Natural killer cell (primary cell): ENCODE measurements at regions of chr17 and their contacts with region 1.

Region 1: DNA sequence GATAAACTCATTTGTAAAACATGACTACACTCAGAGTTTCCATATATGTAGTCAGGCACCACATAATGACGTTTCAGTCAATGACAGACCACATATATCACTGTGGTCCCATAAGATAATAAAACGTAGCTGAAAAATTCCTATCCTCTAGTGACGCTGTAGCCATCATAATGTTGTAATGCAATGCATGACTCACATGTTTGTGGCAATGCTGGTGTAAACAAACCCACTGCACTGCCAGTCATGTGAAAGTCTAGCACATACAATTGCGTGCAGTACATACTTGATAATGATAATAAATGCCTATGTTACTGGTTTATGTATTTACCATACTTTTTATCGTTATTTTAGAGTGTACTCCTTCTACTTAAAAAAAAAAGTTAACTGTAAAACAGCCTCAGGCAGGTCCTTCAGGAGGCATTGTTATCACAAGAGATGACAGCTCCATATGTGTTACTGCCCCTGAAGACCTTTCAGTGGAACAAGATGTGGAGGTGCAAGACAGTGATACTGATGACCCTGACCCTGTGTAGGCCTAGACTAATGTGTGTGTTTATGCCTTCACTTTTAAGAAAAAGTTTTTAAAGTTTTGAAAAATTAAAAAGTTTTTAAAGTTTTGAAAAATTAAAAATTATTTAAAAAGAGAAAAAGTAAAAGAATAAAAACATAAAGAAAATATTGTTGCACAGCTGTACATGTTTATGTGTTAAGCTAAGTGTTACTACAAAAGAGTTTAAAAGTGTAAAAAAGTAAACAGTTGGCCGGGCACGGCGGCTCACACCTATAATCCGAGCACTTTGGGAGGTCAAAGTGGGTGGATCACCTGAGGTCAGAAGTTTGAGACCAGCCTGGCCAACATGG is 9.0 kb downstream of the STAT5B start:
- DNase-seq: peak in 1 of 2 donors; percentile 88
- ATAC-seq: peak; percentile 86 to 95 (median 89)
- H3K4me3 ChIP-seq: no peak overlapping the region
- H3K4me3 Mint-ChIP-seq: no peak overlapping the region
- H3K27ac ChIP-seq: peak overlapping the region; percentile 49
- H3K27ac Mint-ChIP-seq: peak overlapping the region; percentile 80 to 89
- H3K4me1 ChIP-seq: peaks cover 3% of the 10 kb centered on the region
- H3K4me1 Mint-ChIP-seq: peaks cover 15 to 20% of the 10 kb centered on the region in 2 donors
- H3K27me3 ChIP-seq: no peaks in the 10 kb centered on the region
- H3K27me3 Mint-ChIP-seq: no peaks in the 10 kb centered on the region
- CTCF ChIP-seq: no peak

Region 2: GRCh38 chr17:42248351-42249179 is 18.6 kb before region 1 on chr17:
- intact Hi-C with region 1: loop called (anchors 2 kb)
- DNase-seq: peak; percentile 69 to 95
- ATAC-seq: peak; percentile 93 to 98 (median 96)
- H3K4me3 ChIP-seq: peak overlapping the region; percentile 28
- H3K4me3 Mint-ChIP-seq: peak overlapping the region; percentile 93
- H3K27ac ChIP-seq: peak overlapping the region; percentile 88
- H3K27ac Mint-ChIP-seq: peak overlapping the region; percentile 97 to 100
- H3K4me1 ChIP-seq: peaks cover 32% of the 10 kb centered on the region
- H3K4me1 Mint-ChIP-seq: peaks cover 39 to 48% of the 10 kb centered on the region in 2 donors
- H3K27me3 ChIP-seq: no peaks in the 10 kb centered on the region
- H3K27me3 Mint-ChIP-seq: no peaks in the 10 kb centered on the region
- CTCF ChIP-seq: no peak

Region 3: DNA sequence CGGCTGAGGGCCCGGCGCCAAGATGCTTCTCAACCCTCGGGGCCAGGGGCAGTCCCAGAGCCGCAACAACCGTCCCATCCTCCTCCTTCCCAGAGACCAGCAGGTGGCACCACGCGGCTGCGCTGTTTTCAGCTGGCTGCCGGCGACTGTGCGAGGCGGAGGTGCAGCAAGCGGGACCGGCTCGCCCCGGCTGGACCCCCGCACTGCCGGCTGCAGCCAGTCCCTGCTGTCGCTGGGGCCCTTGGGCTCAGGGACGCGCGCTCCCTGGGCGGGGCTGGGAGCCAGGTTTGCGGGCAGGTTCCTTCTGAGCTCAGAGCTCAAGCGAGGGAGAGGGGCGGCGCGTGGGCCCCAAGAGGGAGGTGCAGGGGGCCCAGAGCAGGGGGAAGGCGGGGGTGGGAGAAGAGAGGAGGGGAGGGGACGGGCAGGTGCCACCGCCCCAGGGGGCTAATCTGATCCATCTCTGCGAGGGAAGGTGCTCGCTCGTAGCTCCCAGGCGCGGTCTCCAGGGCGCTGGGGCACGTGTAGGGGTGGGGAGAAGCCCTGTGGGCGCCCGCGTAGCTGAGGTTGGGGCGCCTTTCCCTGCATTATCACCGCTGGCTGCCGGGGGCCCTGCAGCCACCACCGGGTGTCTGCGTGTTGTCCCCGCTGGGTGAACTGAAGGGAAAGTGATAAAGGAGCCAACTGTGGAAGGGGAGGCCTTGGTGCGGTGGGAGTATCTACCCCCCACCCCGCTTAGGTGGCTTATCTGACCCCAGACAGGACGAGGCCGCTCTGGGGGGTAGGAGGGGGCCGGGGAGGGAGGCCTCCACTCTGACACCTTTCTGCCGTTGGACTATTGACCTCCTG is 45.4 kb after region 1 on chr17:
- intact Hi-C with region 1: no loop called
- DNase-seq: peak; percentile 61 to 90
- ATAC-seq: peak; percentile 82
- H3K4me3 ChIP-seq: no peak overlapping the region
- H3K4me3 Mint-ChIP-seq: peak overlapping the region; percentile 35
- H3K27ac ChIP-seq: no peak overlapping the region
- H3K27ac Mint-ChIP-seq: peak overlapping the region; percentile 61 to 65
- H3K4me1 ChIP-seq: peaks cover 38% of the 10 kb centered on the region
- H3K4me1 Mint-ChIP-seq: peaks cover 7 to 32% of the 10 kb centered on the region in 2 donors
- H3K27me3 ChIP-seq: no peaks in the 10 kb centered on the region
- H3K27me3 Mint-ChIP-seq: no peaks in the 10 kb centered on the region
- CTCF ChIP-seq: peak; percentile 47

Region 4: DNA sequence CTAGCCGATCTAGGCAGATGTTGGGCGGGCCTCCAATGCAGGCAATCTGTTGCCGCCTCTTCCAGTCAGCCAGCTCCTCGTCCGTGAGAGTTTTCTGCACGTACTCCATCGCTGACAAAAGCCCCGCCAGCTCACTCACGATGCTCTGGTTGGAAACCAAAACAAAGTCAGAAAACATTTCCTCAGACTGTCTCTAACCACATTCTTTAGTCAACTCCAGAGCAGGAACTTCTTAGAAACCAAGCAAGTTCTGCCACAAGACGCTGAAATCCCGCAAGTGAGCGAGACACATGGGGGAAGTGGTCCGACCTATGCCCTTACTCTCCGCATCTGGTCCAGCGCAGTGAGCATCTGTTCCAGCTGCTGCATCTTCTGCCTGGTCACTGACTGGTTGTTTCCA is 70.3 kb after region 1 on chr17:
- intact Hi-C with region 1: no loop called
- DNase-seq: peak in 1 of 2 donors; percentile 87
- ATAC-seq: peak in 2 of 3 donors; percentile 38 to 53
- H3K4me3 ChIP-seq: no peak overlapping the region
- H3K4me3 Mint-ChIP-seq: no peak overlapping the region
- H3K27ac ChIP-seq: no peak overlapping the region
- H3K27ac Mint-ChIP-seq: no peak overlapping the region
- H3K4me1 ChIP-seq: peaks cover 24% of the 10 kb centered on the region
- H3K4me1 Mint-ChIP-seq: peaks cover 12 to 15% of the 10 kb centered on the region in 2 donors
- H3K27me3 ChIP-seq: no peaks in the 10 kb centered on the region
- H3K27me3 Mint-ChIP-seq: no peaks in the 10 kb centered on the region
- CTCF ChIP-seq: no peak